PC-9 (cell line): ENCODE measurements at regions of chr13 and their contacts with region 1.

Region 1: GRCh38 chr13:75687150-75687763 is 51.1 kb downstream of the LMO7 start:
- DNase-seq: peak in 1 of 2 experiments; percentile 66
- H3K4me3 ChIP-seq: no peak overlapping the region
- H3K27ac ChIP-seq: no peak overlapping the region
- H3K4me1 ChIP-seq: peaks cover 30% of the 10 kb centered on the region
- H3K27me3 ChIP-seq: no peaks in the 10 kb centered on the region
- CTCF ChIP-seq: peak; percentile 81

Region 2: GRCh38 chr13:75760131-75761021 is 73.1 kb after region 1 on chr13:
- CTCF ChIA-PET with region 1: no interaction called
- POLR2A ChIA-PET with region 1: interaction called, 10 read pairs
- intact Hi-C with region 1: no loop called
- DNase-seq: peak; percentile 63 to 94
- H3K4me3 ChIP-seq: peak overlapping the region; percentile 59
- H3K27ac ChIP-seq: peak overlapping the region; percentile 97
- H3K4me1 ChIP-seq: peaks cover 30% of the 10 kb centered on the region
- H3K27me3 ChIP-seq: no peaks in the 10 kb centered on the region
- CTCF ChIP-seq: peak; percentile 44

Region 3: DNA sequence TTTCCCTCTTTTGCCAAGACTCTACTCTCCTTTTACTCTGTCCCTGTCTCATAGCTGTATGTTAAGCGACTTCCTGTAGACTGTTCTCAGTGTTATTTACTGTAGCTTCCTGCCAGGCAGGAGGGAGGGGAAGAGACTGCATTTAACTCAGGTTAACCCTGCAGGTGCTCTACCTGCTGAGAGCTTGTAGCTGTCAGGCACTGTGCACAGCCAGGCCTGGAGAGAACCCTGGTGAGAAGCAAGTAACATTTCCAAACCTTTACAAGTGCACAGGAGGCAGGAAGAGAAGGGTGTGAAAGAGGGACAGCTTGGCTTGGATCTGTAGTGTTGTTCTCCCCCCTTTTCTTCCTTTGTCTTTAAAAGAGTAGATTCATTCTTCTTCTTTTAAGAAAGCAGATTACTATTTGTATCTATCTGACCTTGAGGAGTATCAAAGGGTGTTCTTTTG is 115.9 kb after region 1 on chr13:
- CTCF ChIA-PET with region 1: interaction called, 3 read pairs
- POLR2A ChIA-PET with region 1: interaction called, 40 read pairs
- intact Hi-C with region 1: no loop called
- DNase-seq: no peak
- H3K4me3 ChIP-seq: no peak overlapping the region
- H3K27ac ChIP-seq: no peak overlapping the region
- H3K4me1 ChIP-seq: peaks cover 6% of the 10 kb centered on the region; the same call in 1 of the 2 replicates
- H3K27me3 ChIP-seq: no peaks in the 10 kb centered on the region
- CTCF ChIP-seq: no peak

Region 4: DNA sequence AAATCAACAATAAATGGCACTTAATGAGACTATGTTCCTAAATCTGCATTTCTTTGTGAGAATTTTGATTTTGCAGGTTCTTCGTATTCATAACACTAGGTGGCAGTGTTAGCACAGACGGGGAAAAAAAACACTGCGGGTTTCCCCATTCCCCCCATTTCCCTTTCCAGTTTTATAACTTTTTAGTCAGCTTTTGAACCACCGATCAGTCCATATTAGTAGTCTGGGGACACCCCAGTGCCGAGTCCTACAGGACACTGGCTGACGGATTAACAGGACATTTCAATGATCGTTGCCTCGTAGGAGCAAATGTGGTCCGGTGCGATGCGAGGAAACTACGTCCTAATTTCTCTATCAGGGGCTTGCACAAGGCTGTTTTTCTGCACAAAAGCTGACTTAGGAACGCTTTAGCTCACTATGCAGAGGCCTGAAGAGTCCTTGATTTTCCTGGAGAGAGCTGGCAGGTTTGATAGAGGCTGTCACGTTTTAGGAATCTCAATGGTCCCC is 183.2 kb after region 1 on chr13:
- CTCF ChIA-PET with region 1: no interaction called
- POLR2A ChIA-PET with region 1: no interaction called
- intact Hi-C with region 1: loop called (anchors 2 kb)
- DNase-seq: peak in 1 of 2 experiments; percentile 25
- H3K4me3 ChIP-seq: no peak overlapping the region; the same call in 1 of the 2 replicates
- H3K27ac ChIP-seq: no peak overlapping the region
- H3K4me1 ChIP-seq: no peaks in the 10 kb centered on the region; the same call in 1 of the 2 replicates
- H3K27me3 ChIP-seq: no peaks in the 10 kb centered on the region
- CTCF ChIP-seq: peak; percentile 85

Region 5: GRCh38 chr13:76016799-76017400 is 329.6 kb after region 1 on chr13:
- CTCF ChIA-PET with region 1: no interaction called
- POLR2A ChIA-PET with region 1: no interaction called
- intact Hi-C with region 1: loop called (anchors 5 kb)
- DNase-seq: peak in 1 of 2 experiments; percentile 8
- H3K4me3 ChIP-seq: no peak overlapping the region
- H3K27ac ChIP-seq: no peak overlapping the region
- H3K4me1 ChIP-seq: no peaks in the 10 kb centered on the region; the same call in none of the 2 replicates
- H3K27me3 ChIP-seq: no peaks in the 10 kb centered on the region
- CTCF ChIP-seq: peak; percentile 59

Region 6: GRCh38 chr13:76473552-76474134 is 786.4 kb after region 1 on chr13:
- CTCF ChIA-PET with region 1: interaction called, 3 read pairs
- POLR2A ChIA-PET with region 1: no interaction called
- intact Hi-C with region 1: loop called (anchors 1 kb)
- DNase-seq: peak; percentile 48 to 68
- H3K4me3 ChIP-seq: no peak overlapping the region
- H3K27ac ChIP-seq: no peak overlapping the region
- H3K4me1 ChIP-seq: no peaks in the 10 kb centered on the region
- H3K27me3 ChIP-seq: no peaks in the 10 kb centered on the region
- CTCF ChIP-seq: peak; percentile 94

Region 7: DNA sequence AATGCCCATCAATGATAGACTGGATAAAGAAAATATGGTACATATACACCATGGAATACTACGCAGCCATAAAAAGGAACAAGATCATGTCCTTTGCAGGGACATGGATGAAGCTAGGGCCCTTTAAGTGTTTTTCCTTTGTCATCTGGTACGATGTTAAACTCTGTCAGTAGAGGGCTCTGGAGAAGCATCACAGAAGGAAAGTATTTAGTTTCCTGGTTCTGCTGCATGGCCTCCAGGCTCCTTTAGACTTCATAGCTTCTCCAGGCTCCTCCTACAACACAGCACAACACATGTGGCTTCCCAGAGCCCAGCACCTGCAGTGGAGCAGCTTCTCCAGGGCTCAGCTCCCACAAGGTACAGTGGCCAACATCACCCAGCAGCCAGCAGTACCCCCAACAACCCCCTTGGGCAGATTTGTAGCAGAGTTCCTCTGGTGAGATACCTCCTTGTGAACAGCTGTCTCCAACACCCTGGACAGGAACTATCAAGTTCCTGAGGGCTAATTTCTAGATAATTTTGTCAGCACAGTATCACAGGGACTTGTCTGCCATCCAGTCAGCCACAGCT is 1135.5 kb after region 1 on chr13:
- CTCF ChIA-PET with region 1: no interaction called
- POLR2A ChIA-PET with region 1: no interaction called
- intact Hi-C with region 1: no loop called
- DNase-seq: no peak
- H3K4me3 ChIP-seq: no peak overlapping the region
- H3K27ac ChIP-seq: no peak overlapping the region
- H3K4me1 ChIP-seq: no peaks in the 10 kb centered on the region
- H3K27me3 ChIP-seq: no peaks in the 10 kb centered on the region
- CTCF ChIP-seq: peak; percentile 36; the same call in 1 of the 2 replicates

Region 8: DNA sequence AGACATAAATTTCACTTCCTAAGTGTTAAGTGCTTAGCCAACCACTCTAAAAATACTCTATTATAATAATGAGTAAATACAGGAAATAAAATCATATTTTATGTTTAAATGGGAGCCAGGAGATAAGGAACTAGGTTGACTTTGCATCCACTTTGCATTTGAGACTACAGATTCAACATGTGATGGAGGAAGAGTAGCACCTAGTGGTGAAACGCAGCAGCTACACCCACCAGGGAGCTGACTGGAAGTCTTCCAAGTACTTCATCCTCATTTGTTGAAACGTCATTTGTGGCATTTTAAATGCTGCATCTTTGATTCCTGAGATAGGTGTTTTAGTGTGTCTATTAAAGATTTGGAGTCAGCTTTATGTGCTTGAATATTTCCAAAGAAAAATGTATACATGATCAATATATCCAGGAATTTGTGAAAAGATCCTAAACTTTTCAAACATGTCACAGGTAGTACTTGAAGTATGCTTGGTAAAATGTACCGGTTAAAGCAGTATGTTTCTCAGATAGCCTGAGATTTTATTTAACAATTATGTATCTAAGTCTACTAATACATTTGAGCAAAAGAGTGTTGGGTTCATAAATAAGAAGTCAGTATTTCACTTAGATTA is 1216.4 kb after region 1 on chr13:
- CTCF ChIA-PET with region 1: no interaction called
- POLR2A ChIA-PET with region 1: no interaction called
- intact Hi-C with region 1: loop called (anchors 5 kb)
- DNase-seq: peak; percentile 42 to 49
- H3K4me3 ChIP-seq: no peak overlapping the region
- H3K27ac ChIP-seq: no peak overlapping the region
- H3K4me1 ChIP-seq: no peaks in the 10 kb centered on the region
- H3K27me3 ChIP-seq: no peaks in the 10 kb centered on the region
- CTCF ChIP-seq: peak; percentile 96